HepG2 (cell line): ENCODE measurements at regions of chr5 and their contacts with region 1.

Region 1: GRCh38 chr5:133996683-133997252 is 8.0 kb downstream of the VDAC1 start:
- DNase-seq: no peak
- ATAC-seq: peak; percentile 18
- H3K4me3 ChIP-seq: 0 out of 6 replicates have a peak overlapping the region, but pooled peaks of 1 of the 3 experiments have one; percentile 53
- H3K27ac ChIP-seq: peak overlapping the region; percentile 16
- H3K4me1 ChIP-seq: peaks cover 93% of the 10 kb centered on the region
- H3K27me3 ChIP-seq: no peaks in the 10 kb centered on the region
- CTCF ChIP-seq: peak; percentile 73
- EP300 ChIP-seq: no peak
- POLR2A ChIP-seq: no peak
- RAD21 ChIP-seq: no peak

Region 2: DNA sequence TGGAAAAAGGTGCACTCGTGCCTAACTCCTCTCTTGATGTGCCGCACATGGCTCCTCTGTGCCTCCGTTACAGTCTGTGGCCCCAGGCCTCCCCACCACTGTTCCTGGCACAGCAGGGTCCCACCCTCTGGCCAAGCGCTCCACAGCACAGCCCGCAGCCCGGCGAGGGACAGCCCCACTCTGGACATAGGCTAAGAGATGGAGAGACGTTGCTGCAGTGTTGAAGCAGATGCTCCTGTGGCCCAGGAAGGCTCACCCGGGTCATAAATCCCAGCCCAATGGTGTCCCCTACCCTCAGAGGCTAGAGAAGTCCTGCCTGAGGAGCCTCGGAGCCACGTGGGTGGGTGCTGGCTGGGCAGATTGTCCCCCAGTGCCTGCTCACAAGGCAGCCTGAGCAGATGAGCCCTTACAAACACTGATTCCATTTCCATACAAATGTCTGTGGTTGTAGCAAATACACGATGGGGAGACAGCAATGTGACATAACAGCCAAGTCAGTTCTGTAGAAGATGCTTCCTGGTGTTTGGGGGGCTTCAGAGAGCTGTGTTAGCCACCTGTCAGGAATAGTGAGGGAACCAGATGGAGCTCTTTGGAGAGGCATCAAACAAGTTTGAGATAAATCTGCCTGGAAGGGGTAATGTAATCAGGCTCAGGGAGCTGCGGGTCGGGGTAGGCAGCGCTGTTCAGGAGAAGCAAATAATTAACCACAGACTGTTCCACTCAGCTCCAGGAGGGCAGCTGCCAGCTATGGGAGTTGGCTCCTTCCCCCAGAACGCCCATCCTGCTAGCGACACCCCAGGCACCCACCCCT is 70.1 kb before region 1 on chr5:
- CTCF ChIA-PET with region 1: no interaction called
- POLR2A ChIA-PET with region 1: no interaction called
- in situ Hi-C with region 1: no loop called
- intact Hi-C with region 1: no loop called
- DNase-seq: no peak
- ATAC-seq: peak; percentile 95
- H3K4me3 ChIP-seq: no peak overlapping the region
- H3K27ac ChIP-seq: no peak overlapping the region
- H3K4me1 ChIP-seq: peaks cover 13% of the 10 kb centered on the region; the same call in 1 of the 2 replicates
- H3K27me3 ChIP-seq: peaks cover 9 to 62% of the 10 kb centered on the region in 2 experiments
- CTCF ChIP-seq: no peak
- EP300 ChIP-seq: no peak
- POLR2A ChIP-seq: no peak
- RAD21 ChIP-seq: no peak

Region 3: DNA sequence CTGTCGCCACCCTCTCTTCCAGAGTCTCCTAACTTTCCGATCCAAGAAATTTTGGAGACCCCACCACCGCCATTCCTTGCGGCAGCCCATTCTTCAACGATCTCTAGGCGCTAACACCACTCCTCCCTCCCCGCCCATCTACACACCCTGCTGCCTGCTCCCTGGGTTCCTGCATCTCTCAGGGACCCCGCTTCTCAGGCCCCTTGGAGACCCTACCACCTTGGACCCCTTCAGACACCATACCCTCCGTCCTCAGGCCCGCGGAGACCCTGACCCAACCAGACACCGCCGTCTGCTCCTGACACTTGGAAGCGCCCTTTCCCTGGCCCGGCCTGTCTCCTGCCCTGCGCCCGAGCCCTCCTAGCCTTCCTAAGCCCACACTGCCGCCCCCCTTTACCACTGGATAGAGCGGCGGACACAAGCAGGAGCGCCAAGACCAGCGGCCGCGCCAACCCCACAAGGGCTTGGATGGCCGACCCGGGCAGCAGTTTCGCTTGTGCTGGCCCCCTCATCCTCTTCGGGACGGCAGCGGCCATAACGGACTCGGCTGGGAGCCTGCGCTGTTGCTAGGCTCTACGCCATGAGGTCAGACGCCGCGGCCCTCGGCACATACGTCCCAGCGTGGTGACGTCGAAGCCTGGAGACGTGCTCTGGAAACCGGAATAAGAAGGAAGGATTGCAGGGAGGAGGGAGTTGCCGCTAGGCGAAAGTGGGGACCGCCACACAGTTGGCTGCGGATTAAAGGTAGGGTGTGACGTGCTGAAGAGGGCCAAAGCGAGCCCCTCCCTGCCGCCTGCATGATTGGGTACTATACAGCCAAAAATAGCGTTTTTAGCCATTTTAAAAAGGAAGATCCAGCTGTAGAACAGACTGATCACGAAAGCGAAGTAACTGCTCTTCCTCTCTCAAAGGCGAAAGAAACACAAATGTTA is 28.5 kb before region 1 on chr5 and contains the start of gene C5orf15:
- CTCF ChIA-PET with region 1: no interaction called
- POLR2A ChIA-PET with region 1: interaction called, 94 read pairs
- in situ Hi-C with region 1: no loop called
- intact Hi-C with region 1: no loop called
- DNase-seq: peak; percentile 95
- ATAC-seq: peak; percentile 94
- H3K4me3 ChIP-seq: peak within 1 kb of the TSS; percentile 80 to 98 (median 93)
- H3K27ac ChIP-seq: peak within 1 kb of the TSS; percentile 93
- H3K4me1 ChIP-seq: peaks cover 51% of the 10 kb centered on the region
- H3K27me3 ChIP-seq: no peaks in the 10 kb centered on the region; a peak in 1 of 5 replicates
- CTCF ChIP-seq: peak; percentile 36; the same call in 1 of the 2 replicates
- EP300 ChIP-seq: 0 out of 4 replicates have a peak, but pooled peaks of 1 of the 2 experiments have one; percentile 14
- POLR2A ChIP-seq: peak; percentile 89 to 93
- RAD21 ChIP-seq: peak; percentile 46; the same call in 1 of the 2 replicates
- total RNA-seq, gene C5orf15: 35.7 and 58.5 TPM in 2 replicates

Region 4: GRCh38 chr5:133977161-133977787 is 19.5 kb before region 1 on chr5:
- CTCF ChIA-PET with region 1: no interaction called
- POLR2A ChIA-PET with region 1: interaction called, 94 read pairs
- in situ Hi-C with region 1: no loop called
- intact Hi-C with region 1: loop called (anchors 2 kb)
- DNase-seq: peak; percentile 76
- ATAC-seq: peak; percentile 96
- H3K4me3 ChIP-seq: no peak overlapping the region
- H3K27ac ChIP-seq: peak overlapping the region; percentile 68
- H3K4me1 ChIP-seq: peaks cover 32% of the 10 kb centered on the region
- H3K27me3 ChIP-seq: no peaks in the 10 kb centered on the region
- CTCF ChIP-seq: no peak
- EP300 ChIP-seq: no peak
- POLR2A ChIP-seq: no peak
- RAD21 ChIP-seq: no peak